ENCODE measurements at regions of chr19 and their contacts with region 1.

Region 1: GRCh38 chr19:45862564-45863334 is at the start of gene SYMPK:
- DNase-seq: peak; percentile 98
- ATAC-seq: peak; percentile 95
- H3K4me3 ChIP-seq: peak within 1 kb of the TSS; percentile 66 to 87 (median 83)
- H3K4me3 Mint-ChIP-seq: peak within 1 kb of the TSS; percentile 91
- H3K27ac ChIP-seq: peak within 1 kb of the TSS; percentile 93 to 95
- H3K27ac Mint-ChIP-seq: peak within 1 kb of the TSS; percentile 98
- H3K4me1 ChIP-seq: peaks cover 27 to 33% of the 10 kb centered on the region in 2 donors
- H3K4me1 Mint-ChIP-seq: peaks cover 34% of the 10 kb centered on the region
- H3K27me3 ChIP-seq: peaks cover 0 to 14% (median 6%) of the 10 kb centered on the region in 4 experiments
- H3K27me3 Mint-ChIP-seq: peaks cover 10% of the 10 kb centered on the region
- CTCF ChIP-seq: no peak
- total RNA-seq, gene SYMPK: 131 and 138 TPM in 2 replicates

Region 2: DNA sequence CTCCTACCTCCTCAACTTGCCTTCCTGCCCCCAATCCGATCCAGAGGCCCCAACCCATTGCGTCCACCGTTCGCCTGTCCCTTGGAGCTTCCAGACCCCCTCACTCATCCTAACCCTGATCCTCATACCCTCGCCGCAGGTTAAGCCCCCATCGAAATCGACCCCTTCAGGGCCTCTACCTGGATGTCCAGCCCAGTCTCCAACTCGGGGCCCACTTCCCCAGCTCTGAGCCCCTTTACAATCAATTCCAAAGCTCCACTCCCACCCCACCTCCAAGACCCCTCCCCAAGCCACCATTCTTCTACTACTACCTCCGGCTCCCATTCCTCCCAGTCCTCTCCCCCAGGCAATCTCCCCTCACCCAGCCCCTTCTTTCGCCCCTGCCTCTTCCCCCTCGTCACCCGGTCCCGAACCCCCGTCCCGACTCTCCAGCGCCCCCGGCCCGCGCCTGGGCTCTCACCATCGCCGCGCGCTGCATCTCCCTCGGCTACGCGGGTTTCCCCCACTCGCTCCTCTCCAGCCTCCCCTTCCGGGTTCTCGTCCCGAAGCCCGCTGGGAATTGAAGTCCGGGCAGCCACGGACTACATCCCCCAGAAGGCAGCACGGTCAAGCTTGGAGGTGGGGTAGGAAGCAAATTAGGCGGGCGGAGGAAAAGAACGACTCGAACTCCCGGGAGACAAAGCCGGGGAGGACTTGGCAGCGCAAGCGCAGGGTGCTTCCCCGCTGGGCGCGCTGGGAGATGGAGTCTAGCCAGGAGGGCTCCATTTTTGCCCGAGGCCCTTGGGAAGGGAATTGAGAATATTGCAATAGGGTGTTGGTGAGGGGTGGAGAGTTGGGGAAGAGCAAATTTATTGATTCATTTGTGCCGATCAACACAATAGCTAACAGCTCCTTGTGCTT is 132.1 kb before region 1 on chr19 and contains the start of gene FBXO46:
- CTCF ChIA-PET with region 1: no interaction called
- POLR2A ChIA-PET with region 1: no interaction called
- intact Hi-C with region 1: loop called (anchors 2 kb)
- DNase-seq: peak; percentile 96
- ATAC-seq: peak; percentile 97
- H3K4me3 ChIP-seq: peak within 1 kb of the TSS; percentile 68 to 98 (median 87)
- H3K4me3 Mint-ChIP-seq: peak within 1 kb of the TSS; percentile 94
- H3K27ac ChIP-seq: peak within 1 kb of the TSS; percentile 54 to 94
- H3K27ac Mint-ChIP-seq: peak within 1 kb of the TSS; percentile 94
- H3K4me1 ChIP-seq: peaks cover 11 to 25% of the 10 kb centered on the region in 2 donors
- H3K4me1 Mint-ChIP-seq: peaks cover 28% of the 10 kb centered on the region
- H3K27me3 ChIP-seq: no peaks in the 10 kb centered on the region
- H3K27me3 Mint-ChIP-seq: no peaks in the 10 kb centered on the region
- CTCF ChIP-seq: peak; percentile 26
- total RNA-seq, gene FBXO46: 43.7 and 44.5 TPM in 2 replicates

Region 3: GRCh38 chr19:45792470-45793177 is 70.1 kb before region 1 on chr19 and contains the start of gene DMWD:
- CTCF ChIA-PET with region 1: no interaction called
- POLR2A ChIA-PET with region 1: no interaction called
- intact Hi-C with region 1: loop called (anchors 1 kb)
- DNase-seq: peak; percentile 99
- ATAC-seq: peak; percentile 97
- H3K4me3 ChIP-seq: peak within 1 kb of the TSS; percentile 40 to 73 (median 59)
- H3K4me3 Mint-ChIP-seq: peak within 1 kb of the TSS; percentile 93
- H3K27ac ChIP-seq: peak within 1 kb of the TSS; percentile 22 to 76
- H3K27ac Mint-ChIP-seq: peak within 1 kb of the TSS; percentile 92
- H3K4me1 ChIP-seq: peaks cover 24 to 29% of the 10 kb centered on the region in 2 donors
- H3K4me1 Mint-ChIP-seq: peaks cover 30% of the 10 kb centered on the region
- H3K27me3 ChIP-seq: no peaks in the 10 kb centered on the region
- H3K27me3 Mint-ChIP-seq: peaks cover 8% of the 10 kb centered on the region
- CTCF ChIP-seq: no peak
- total RNA-seq, gene DMWD: 86.4 and 91.2 TPM in 2 replicates

Region 4: DNA sequence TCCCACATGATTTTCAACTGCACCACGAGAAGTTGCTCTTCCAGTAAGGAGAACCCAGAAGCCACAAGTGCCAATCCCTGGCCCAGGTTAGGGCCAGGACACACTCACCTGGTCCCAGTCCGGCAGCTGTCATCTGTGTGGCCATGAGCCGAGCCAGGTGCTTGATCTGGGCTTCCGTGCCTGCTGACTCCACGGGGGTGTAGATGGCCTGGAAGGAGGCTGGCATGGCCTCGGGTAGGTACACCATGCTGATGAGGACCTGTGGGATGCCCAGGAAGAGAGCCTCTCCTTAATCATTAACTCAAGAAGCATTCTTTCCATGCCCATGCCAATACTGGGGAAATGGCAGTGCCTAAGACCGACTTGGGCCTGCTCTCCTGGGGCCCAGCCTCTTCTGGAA is 27.8 kb before region 1 on chr19:
- CTCF ChIA-PET with region 1: no interaction called
- POLR2A ChIA-PET with region 1: no interaction called
- intact Hi-C with region 1: no loop called
- DNase-seq: no peak
- ATAC-seq: no peak
- H3K4me3 ChIP-seq: no peak overlapping the region
- H3K4me3 Mint-ChIP-seq: no peak overlapping the region
- H3K27ac ChIP-seq: no peak overlapping the region
- H3K27ac Mint-ChIP-seq: no peak overlapping the region
- H3K4me1 ChIP-seq: no peaks in the 10 kb centered on the region
- H3K4me1 Mint-ChIP-seq: no peaks in the 10 kb centered on the region
- H3K27me3 ChIP-seq: no peaks in the 10 kb centered on the region
- H3K27me3 Mint-ChIP-seq: no peaks in the 10 kb centered on the region
- CTCF ChIP-seq: no peak

Region 5: GRCh38 chr19:45886427-45887199 is 23.9 kb after region 1 on chr19:
- CTCF ChIA-PET with region 1: interaction called, 24 read pairs
- POLR2A ChIA-PET with region 1: interaction called, 6 read pairs
- intact Hi-C with region 1: loop called (anchors 1 kb)
- DNase-seq: peak; percentile 94
- ATAC-seq: peak; percentile 68
- H3K4me3 ChIP-seq: peak overlapping the region; percentile 68 to 86 (median 78)
- H3K4me3 Mint-ChIP-seq: peak overlapping the region; percentile 95
- H3K27ac ChIP-seq: peak overlapping the region; percentile 83 to 90
- H3K27ac Mint-ChIP-seq: peak overlapping the region; percentile 94
- H3K4me1 ChIP-seq: peaks cover 24 to 39% of the 10 kb centered on the region in 2 donors
- H3K4me1 Mint-ChIP-seq: peaks cover 28% of the 10 kb centered on the region
- H3K27me3 ChIP-seq: no peaks in the 10 kb centered on the region
- H3K27me3 Mint-ChIP-seq: no peaks in the 10 kb centered on the region
- CTCF ChIP-seq: no peak

Region 6: DNA sequence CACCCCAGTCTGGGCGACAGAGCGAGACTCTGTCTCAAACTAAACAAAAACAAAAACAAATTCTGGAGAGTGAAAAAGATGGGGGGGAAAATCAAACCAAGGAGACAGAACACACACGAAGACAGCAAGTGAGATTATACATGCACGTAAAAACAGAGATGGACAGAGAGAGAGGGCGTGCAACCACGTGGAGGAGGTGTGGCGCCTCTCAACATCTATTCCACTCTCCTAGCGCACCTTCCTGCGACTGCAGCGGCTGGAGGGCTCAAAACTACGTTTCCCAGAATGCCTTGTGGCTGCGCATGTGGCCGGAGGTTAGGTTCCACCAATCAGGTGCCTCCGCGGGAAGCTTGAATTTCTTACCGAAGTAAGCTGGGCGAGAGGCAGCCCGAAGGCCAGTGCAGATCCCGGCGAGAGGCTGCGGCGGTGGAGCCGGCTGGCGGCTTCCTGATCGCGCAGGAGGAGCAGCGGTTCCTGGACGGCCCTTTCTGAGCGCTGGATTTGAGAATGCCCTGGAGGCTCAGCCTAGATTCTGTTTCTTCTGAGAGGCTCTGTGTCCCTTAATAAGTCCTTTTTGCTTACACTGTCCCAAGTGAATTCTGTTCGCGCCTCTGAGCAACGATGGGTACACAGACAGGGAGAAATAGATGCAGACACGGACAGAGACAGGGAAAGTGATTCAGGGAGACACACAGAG is 65.0 kb after region 1 on chr19:
- CTCF ChIA-PET with region 1: no interaction called
- POLR2A ChIA-PET with region 1: no interaction called
- intact Hi-C with region 1: loop called (anchors 1 kb)
- DNase-seq: peak; percentile 93
- ATAC-seq: peak; percentile 99
- H3K4me3 ChIP-seq: no peak overlapping the region
- H3K4me3 Mint-ChIP-seq: peak overlapping the region; percentile 32
- H3K27ac ChIP-seq: no peak overlapping the region
- H3K27ac Mint-ChIP-seq: no peak overlapping the region
- H3K4me1 ChIP-seq: peaks cover 7 to 8% of the 10 kb centered on the region in 2 donors
- H3K4me1 Mint-ChIP-seq: peaks cover 8% of the 10 kb centered on the region
- H3K27me3 ChIP-seq: peaks cover 0 to 8% (median 1%) of the 10 kb centered on the region in 4 experiments
- H3K27me3 Mint-ChIP-seq: peaks cover 11% of the 10 kb centered on the region
- CTCF ChIP-seq: no peak

Region 7: GRCh38 chr19:46016426-46017094 is 153.8 kb after region 1 on chr19:
- CTCF ChIA-PET with region 1: no interaction called
- POLR2A ChIA-PET with region 1: no interaction called
- intact Hi-C with region 1: loop called (anchors 2 kb)
- DNase-seq: peak; percentile 85
- ATAC-seq: peak; percentile 85
- H3K4me3 ChIP-seq: peak overlapping the region; percentile 65 to 81 (median 76)
- H3K4me3 Mint-ChIP-seq: peak overlapping the region; percentile 94
- H3K27ac ChIP-seq: no peak overlapping the region
- H3K27ac Mint-ChIP-seq: peak overlapping the region; percentile 69
- H3K4me1 ChIP-seq: peaks cover 19 to 22% of the 10 kb centered on the region in 2 donors
- H3K4me1 Mint-ChIP-seq: peaks cover 18% of the 10 kb centered on the region
- H3K27me3 ChIP-seq: peaks cover 0 to 21% (median 7%) of the 10 kb centered on the region in 4 experiments
- H3K27me3 Mint-ChIP-seq: peaks cover 18% of the 10 kb centered on the region
- CTCF ChIP-seq: peak; percentile 83